ENCODE measurements at regions of chr9 and their contacts with region 1.

Region 1: GRCh38 chr9:123218831-123219230 is 49.6 kb downstream of the STRBP start:
- DNase-seq: no peak
- ATAC-seq: no peak
- H3K4me3 ChIP-seq: peak overlapping the region in 1 of 5 experiments; percentile 12
- H3K4me3 Mint-ChIP-seq: peak overlapping the region; percentile 40
- H3K27ac ChIP-seq: peak overlapping the region in 1 of 2 donors; percentile 38
- H3K27ac Mint-ChIP-seq: peak overlapping the region; percentile 76
- H3K4me1 ChIP-seq: peaks cover 36 to 57% of the 10 kb centered on the region in 2 donors
- H3K4me1 Mint-ChIP-seq: peaks cover 72% of the 10 kb centered on the region
- H3K27me3 ChIP-seq: no peaks in the 10 kb centered on the region
- H3K27me3 Mint-ChIP-seq: no peaks in the 10 kb centered on the region
- CTCF ChIP-seq: no peak

Region 2: DNA sequence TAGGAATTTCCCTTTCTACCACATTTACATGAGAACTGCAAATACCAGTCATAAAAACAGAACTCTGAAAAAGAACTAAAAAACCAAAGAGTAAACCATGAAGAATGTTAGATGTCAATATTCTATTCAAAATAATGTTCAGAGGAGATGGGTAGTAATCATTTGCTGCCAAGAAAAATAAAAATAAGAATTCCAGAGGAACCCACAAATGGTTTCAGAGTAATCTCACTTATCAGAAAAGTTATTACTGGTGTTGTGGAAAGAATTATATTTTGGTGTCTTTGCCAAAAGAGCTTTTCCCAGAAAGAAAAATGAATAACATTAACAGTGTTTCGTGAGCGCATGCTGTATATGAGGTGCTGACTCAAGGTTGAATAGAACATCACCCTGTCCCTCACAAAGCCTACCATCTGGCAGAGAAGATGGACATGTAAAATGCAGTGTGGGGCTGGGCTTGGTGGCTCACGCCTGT is 149.8 kb before region 1 on chr9:
- CTCF ChIA-PET with region 1: no interaction called
- POLR2A ChIA-PET with region 1: interaction called, 10 read pairs
- intact Hi-C with region 1: no loop called
- DNase-seq: no peak
- ATAC-seq: no peak
- H3K4me3 ChIP-seq: no peak overlapping the region
- H3K4me3 Mint-ChIP-seq: no peak overlapping the region
- H3K27ac ChIP-seq: no peak overlapping the region
- H3K27ac Mint-ChIP-seq: no peak overlapping the region
- H3K4me1 ChIP-seq: peaks cover 7 to 8% of the 10 kb centered on the region in 2 donors
- H3K4me1 Mint-ChIP-seq: peaks cover 18% of the 10 kb centered on the region
- H3K27me3 ChIP-seq: no peaks in the 10 kb centered on the region
- H3K27me3 Mint-ChIP-seq: no peaks in the 10 kb centered on the region
- CTCF ChIP-seq: no peak

Region 3: DNA sequence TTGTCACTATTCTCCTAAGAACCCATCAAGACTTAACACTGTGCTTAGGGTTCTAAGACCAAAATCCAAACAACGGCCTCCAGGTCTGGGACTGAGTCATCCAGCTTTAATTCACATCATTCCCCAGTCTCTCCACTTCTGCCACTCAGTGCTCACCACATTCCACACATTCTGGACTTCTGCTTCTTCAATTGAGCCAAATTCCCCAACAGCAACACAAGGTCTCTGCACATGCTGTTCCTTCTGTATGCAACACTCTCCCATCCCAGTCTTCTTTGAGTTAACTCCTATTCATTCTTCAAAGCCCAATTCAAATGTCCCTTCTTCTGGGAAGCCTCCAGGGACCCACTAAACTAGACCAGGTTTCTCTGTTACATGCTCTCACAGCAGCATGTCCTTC is 87.6 kb before region 1 on chr9:
- CTCF ChIA-PET with region 1: no interaction called
- POLR2A ChIA-PET with region 1: no interaction called
- intact Hi-C with region 1: no loop called
- DNase-seq: no peak
- ATAC-seq: no peak
- H3K4me3 ChIP-seq: no peak overlapping the region
- H3K4me3 Mint-ChIP-seq: no peak overlapping the region
- H3K27ac ChIP-seq: no peak overlapping the region
- H3K27ac Mint-ChIP-seq: no peak overlapping the region
- H3K4me1 ChIP-seq: peaks cover 0 to 11% of the 10 kb centered on the region in 2 donors
- H3K4me1 Mint-ChIP-seq: peaks cover 19% of the 10 kb centered on the region
- H3K27me3 ChIP-seq: no peaks in the 10 kb centered on the region
- H3K27me3 Mint-ChIP-seq: no peaks in the 10 kb centered on the region
- CTCF ChIP-seq: no peak

Measured in B cell (primary cell).